ENCODE measurements at regions of chr2 and their contacts with region 1.

Region 1: DNA sequence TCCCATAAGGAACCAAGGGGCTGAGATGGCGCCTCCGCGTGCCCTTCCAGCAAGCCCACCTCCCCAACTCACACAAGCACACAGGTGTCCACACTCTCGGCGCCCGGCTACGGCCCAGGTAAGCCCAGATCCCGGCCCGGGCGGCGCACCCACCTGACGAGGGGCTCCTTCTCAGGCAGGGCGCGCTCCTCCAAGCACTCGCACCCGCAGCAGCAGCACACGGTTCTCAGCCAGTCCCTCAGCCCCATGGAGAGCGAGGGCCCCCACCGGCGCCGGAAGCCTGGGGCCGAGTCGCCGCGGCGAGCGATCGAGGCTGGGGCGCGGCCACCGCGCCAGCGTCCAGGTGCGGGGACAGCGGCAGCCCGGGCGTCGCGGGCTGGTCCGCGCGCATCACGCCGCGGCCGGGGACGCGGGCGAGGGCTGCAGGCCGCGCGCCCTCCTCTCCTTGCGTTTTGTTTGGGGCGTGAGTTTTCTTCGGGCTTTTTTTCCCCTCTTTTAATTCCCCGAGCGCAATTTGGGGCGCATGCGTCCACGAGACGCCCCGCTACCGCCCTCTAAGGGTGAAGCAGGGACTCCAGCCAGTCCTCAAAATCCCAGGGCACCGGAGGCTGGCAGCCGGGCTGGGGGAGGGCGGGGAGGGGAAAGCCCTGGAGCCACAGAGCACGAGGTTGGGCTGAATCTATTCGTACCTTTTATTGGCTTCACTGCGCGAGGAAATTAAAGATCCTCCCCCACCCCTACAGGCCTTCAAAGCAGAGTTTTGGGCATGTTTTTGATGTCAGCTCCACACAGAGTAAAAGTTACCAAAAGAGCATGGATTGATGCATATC is at the start of gene MREG:
- DNase-seq: peak; percentile 74
- H3K4me3 Mint-ChIP-seq: peak within 1 kb of the TSS; percentile 80
- H3K27ac Mint-ChIP-seq: peak within 1 kb of the TSS; percentile 56
- H3K4me1 Mint-ChIP-seq: peaks cover 53% of the 10 kb centered on the region
- H3K27me3 Mint-ChIP-seq: peaks cover 2% of the 10 kb centered on the region
- total RNA-seq, gene MREG: 9.2 and 10.1 TPM in 2 replicates

Region 2: GRCh38 chr2:215311625-215312396 is 701.5 kb before region 1 on chr2 and contains the start of gene ATIC:
- intact Hi-C with region 1: loop called (anchors 10 kb)
- DNase-seq: peak; percentile 90
- H3K4me3 Mint-ChIP-seq: peak within 1 kb of the TSS; percentile 97
- H3K27ac Mint-ChIP-seq: peak within 1 kb of the TSS; percentile 95
- H3K4me1 Mint-ChIP-seq: peaks cover 33% of the 10 kb centered on the region
- H3K27me3 Mint-ChIP-seq: no peaks in the 10 kb centered on the region
- total RNA-seq, gene ATIC: 287 and 299 TPM in 2 replicates

Region 3: GRCh38 chr2:215949991-215950404 is 63.3 kb before region 1 on chr2:
- intact Hi-C with region 1: loop called (anchors 1 kb)
- DNase-seq: no peak
- H3K4me3 Mint-ChIP-seq: no peak overlapping the region
- H3K27ac Mint-ChIP-seq: no peak overlapping the region
- H3K4me1 Mint-ChIP-seq: no peaks in the 10 kb centered on the region
- H3K27me3 Mint-ChIP-seq: peaks cover 2% of the 10 kb centered on the region

Region 4: DNA sequence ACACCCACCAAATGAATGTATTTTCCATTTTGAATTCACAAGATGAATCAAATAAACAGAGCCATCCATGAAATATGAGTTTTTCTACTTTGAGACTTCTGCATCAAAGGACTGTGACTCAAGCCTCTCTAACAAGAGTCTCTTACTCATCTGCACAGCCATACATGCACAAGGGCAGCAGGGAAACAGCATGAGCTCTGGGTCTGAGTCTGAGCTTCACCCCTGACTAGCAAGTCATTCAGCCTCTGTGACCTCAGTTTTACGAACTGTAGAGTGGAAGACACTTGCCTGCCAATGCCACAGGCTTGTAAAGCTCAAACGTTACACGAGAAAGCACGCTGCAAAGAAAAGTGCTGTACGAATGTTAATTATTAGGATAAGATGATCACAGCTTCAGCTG is 42.9 kb before region 1 on chr2:
- intact Hi-C with region 1: loop called (anchors 2 kb)
- DNase-seq: no peak
- H3K4me3 Mint-ChIP-seq: no peak overlapping the region
- H3K27ac Mint-ChIP-seq: peak overlapping the region; percentile 41
- H3K4me1 Mint-ChIP-seq: peaks cover 39% of the 10 kb centered on the region
- H3K27me3 Mint-ChIP-seq: no peaks in the 10 kb centered on the region

Region 5: DNA sequence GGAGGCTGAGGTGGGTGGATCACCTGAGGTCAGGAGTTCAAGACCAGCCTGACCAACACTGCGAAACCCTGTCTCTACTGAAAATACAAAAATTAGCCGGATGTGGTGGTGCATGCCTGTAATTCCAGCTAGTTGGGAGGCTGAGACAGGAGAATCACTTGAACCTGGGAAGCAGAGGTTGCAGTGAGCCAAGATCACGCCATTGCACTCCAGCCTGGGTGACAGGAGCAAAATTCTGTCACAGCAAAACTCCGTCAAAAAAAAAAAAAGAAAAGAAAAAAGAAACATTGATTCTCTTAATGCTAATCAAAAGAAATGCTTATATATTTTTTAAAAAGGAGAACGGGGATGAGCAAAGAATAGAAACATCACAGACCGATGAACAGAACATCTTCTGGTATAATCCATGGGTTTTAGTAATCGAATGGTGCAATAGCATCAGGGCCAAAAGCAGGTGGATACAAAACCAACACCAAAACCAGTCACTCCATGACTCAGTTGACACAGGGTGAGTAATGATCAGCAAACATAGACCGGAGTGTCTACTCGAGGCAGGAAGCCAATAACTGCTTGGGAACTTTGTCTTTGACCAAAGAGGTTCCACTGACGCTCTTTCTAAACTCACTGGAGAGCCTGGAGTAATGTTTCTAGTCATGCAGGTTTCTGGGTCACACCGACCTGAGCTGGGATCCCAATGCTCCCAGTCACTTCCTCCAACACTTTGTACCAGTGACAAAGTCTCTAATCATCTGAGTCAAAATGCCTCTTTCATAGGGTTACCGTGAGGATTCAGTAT is 31.0 kb before region 1 on chr2:
- intact Hi-C with region 1: loop called (anchors 5 kb)
- DNase-seq: no peak
- H3K4me3 Mint-ChIP-seq: no peak overlapping the region
- H3K27ac Mint-ChIP-seq: peak overlapping the region; percentile 47
- H3K4me1 Mint-ChIP-seq: peaks cover 19% of the 10 kb centered on the region
- H3K27me3 Mint-ChIP-seq: no peaks in the 10 kb centered on the region

Region 6: DNA sequence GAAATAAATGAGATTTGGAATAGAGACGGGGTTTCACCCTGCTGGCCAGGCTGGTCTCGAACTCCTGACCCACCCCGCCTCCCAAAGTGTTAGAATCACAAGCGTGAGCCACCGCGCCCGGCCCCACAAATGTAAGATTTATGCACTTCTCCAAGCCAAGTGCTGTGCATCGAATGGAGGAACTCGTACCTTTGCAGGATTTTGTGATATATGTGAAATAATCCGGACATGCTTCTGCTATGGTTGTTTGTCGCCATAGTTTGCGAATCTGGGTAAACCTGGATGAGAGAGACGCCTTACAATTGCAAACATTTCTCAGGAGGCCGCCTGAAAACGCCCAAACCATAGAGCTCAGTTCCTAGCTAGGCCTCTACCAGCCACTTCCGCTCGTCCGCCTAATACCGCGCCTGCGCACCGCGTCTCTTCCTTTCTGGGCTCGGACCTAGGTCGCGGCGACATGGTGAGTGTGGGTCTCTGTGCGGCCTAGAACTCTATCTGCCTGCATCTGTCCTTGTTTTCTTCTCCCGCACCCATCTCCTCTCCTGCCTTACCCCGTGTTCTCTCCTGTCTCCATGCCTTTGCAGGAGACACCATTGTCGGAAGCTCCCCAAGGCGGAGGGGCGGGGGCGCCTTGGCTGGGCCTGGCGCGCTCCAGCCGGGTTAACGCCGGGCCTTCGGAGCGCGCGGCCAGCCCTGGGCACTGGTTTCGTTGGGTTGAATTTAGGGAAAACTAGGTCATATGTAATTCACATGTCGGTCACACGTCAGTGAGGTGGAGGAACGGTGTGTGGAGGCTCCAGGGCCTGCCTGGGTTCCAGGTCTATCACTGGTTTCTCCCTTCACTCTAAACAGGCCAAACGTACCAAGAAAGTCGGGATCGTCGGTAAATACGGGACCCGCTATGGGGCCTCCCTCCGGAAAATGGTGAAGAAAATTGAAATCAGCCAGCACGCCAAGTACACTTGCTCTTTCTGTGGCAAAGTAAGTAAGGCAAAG is 485.4 kb after region 1 on chr2 and contains the start of gene RPL37A:
- intact Hi-C with region 1: loop called (anchors 10 kb)
- DNase-seq: peak; percentile 87
- H3K4me3 Mint-ChIP-seq: peak within 1 kb of the TSS; percentile 93
- H3K27ac Mint-ChIP-seq: peak within 1 kb of the TSS; percentile 86
- H3K4me1 Mint-ChIP-seq: peaks cover 57% of the 10 kb centered on the region
- H3K27me3 Mint-ChIP-seq: no peaks in the 10 kb centered on the region
- total RNA-seq, gene RPL37A: 2,803 and 2,922 TPM in 2 replicates